Activated CD8-positive, alpha-beta T cell treated with anti-CD3 and anti-CD28 coated beads for 36 hours (primary cell): ENCODE measurements at regions of chr12 and their contacts with region 1.

Region 1: DNA sequence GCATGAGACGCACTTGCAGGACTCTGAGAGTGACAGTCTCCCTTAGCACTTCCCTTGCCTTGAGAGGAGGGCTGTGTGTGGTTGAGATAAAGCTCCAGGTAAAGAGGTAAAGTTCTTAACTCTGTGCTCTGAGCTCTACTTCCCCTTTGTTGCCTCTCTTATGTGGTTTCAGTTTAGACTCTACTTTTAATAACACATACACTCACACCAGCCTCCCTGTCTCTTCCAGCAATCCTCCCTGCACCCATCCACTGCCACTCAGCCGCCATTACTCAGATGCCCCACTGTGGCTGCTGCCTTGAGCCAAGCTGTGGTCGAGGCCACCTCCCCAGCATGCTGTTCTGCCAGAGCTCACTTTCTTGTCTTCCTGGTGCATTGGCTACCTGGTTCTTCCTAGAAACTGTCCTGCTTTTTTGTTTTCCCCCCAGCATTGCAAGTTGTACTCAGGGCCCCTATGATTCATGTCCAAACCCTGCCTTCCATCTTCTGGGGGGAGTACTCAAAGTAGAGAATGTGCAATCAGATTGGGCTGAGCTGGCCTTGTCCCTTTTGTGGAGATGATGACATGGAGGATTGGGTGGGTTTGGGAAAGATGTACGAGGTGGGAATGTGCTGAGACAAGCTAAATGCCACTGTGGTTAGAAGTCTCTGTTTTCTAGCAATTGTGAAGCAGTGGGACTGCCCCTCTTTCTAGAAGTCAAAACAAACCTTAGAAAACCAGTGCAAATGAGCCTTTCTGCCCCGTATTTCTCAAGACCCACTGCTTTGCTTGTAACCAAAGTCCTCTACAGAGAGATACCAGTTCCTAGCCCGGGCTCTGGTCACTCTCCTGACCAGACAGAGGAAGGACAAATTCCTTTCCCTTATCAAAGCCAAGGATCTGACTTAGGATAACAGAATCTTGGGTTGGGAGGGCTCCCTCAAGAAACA is 115.6 kb upstream of the PARP11 start:
- DNase-seq: peak; percentile 67
- ATAC-seq: peak; percentile 78
- H3K4me3 Mint-ChIP-seq: peak overlapping the region; percentile 58
- H3K27ac Mint-ChIP-seq: peak overlapping the region; percentile 85
- H3K4me1 Mint-ChIP-seq: peaks cover 32% of the 10 kb centered on the region
- H3K27me3 Mint-ChIP-seq: no peaks in the 10 kb centered on the region
- CTCF ChIP-seq: no peak

Region 2: DNA sequence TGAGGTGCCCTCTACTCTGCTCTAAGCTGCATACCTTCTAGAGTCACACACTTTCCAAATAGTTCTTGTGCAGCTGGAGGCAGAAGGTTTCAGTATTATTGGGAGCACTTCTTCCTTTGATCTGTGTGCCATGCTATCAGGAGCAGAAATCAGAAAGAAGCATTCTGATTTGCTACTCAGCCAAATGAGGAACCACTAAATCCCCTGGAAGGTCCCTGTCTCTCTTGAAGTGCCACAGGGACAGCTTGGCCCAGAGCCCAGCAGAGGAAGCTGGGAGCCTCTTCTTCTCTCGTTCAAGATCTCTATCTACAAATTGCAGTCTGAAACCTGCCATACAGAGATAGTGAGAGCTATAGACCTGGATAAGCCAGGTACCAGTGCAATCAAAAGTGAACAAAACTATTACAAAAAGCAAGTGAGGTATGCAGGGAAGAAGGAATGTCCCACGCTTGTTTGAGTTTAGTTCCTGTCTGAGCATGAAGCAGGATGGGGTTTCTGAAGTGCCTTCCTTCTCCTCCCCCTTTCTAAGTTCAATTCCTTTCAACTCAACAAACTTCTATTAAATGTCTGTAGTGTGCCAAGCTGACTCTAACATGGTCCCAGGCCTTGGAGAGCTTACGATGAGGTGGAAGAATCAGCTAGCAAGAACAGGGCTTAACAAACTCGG is 14.7 kb before region 1 on chr12:
- CTCF ChIA-PET with region 1: interaction called, 20 read pairs
- POLR2A ChIA-PET with region 1: interaction called, 12 read pairs
- intact Hi-C with region 1: no loop called
- DNase-seq: peak; percentile 37
- ATAC-seq: peak; percentile 18
- H3K4me3 Mint-ChIP-seq: peak overlapping the region; percentile 52
- H3K27ac Mint-ChIP-seq: peak overlapping the region; percentile 92
- H3K4me1 Mint-ChIP-seq: peaks cover 64% of the 10 kb centered on the region
- H3K27me3 Mint-ChIP-seq: no peaks in the 10 kb centered on the region
- CTCF ChIP-seq: no peak